Gastrocnemius medialis (tissue), 4 donors: ENCODE measurements at regions of chr9 and their contacts with region 1.

Region 1: GRCh38 chr9:114906908-114907571 is 23.4 kb downstream of the TNFSF8 start:
- DNase-seq: no peak
- ATAC-seq: no peak
- H3K4me3 ChIP-seq: no peak overlapping the region
- H3K27ac ChIP-seq: no peak overlapping the region
- H3K4me1 ChIP-seq: no peaks in the 10 kb centered on the region
- H3K27me3 ChIP-seq: no peaks in the 10 kb centered on the region
- CTCF ChIP-seq: no peak
- POLR2A ChIP-seq: no peak

Region 2: GRCh38 chr9:114738581-114739316 is 168.3 kb before region 1 on chr9:
- in situ Hi-C with region 1: loop called in 2 of 4 experiments (anchors 5 to 10 kb)
- intact Hi-C with region 1: loop called (anchors 1 kb)
- DNase-seq: peak; percentile 35
- ATAC-seq: peak in 1 of 2 donors; percentile 42
- H3K4me3 ChIP-seq: no peak overlapping the region
- H3K27ac ChIP-seq: no peak overlapping the region
- H3K4me1 ChIP-seq: no peaks in the 10 kb centered on the region
- H3K27me3 ChIP-seq: no peaks in the 10 kb centered on the region
- CTCF ChIP-seq: peak; percentile 50 to 71 (median 70)
- POLR2A ChIP-seq: no peak